ENCODE measurements at regions of chr13 and their contacts with region 1.

Region 1: DNA sequence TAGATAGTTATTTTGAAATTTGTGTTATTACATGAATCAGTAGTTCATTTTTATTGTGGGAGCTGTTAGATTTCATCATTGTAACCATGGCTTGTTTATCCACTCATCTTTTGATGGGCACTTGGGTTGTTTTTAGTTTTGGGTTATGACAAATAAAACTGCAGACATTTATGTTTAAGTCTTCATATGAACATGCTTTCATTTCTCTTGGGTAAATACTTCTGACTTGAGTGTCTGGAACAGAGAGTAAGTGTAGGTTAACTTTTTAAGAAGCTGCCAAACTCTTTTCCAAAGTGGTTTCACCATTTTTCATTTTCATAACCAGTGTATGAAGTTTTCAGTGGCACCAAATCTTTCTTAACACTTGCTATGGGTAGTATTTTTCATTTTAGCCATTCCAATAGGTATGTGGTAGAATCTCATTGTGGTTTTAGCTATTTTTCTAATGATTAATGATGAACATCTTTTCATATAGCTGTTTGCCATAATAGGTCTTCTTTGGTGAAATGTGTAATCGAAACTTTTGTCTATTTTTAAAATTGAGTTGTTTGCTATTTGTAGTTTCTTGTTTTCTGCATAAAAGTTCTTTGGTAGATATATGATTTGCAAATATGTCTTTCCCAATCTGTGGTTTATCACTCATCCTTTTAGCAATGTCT is 17.9 kb downstream of the SLAIN1 start:
- DNase-seq: no peak
- H3K4me3 Mint-ChIP-seq: no peak overlapping the region
- H3K27ac Mint-ChIP-seq: peak overlapping the region; percentile 47
- H3K4me1 Mint-ChIP-seq: peaks cover 31% of the 10 kb centered on the region
- H3K27me3 Mint-ChIP-seq: no peaks in the 10 kb centered on the region

Region 2: DNA sequence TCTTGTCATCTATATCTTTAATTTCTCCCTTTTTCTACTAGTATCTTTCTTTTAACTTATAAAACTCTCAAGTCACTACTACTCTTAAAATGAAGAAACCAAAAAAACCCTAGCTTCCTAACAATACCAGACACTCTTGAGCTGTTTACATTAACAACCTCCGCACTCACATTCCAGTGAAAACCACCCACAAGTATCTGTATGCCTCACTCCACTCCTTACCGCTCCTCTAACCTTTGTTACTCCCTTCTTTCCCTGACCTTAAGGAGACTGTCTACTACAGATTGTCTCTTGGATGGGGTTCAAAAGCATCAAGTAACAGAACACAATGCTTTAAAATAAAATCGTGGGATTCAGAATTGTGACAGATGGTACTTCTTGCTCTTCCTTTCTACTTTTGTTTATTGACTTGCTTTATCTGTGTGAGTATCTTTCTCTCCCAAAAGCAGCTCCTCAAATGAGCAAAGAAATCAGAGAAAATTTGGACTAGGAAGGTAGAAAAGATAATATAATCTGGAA is 578.4 kb before region 1 on chr13:
- intact Hi-C with region 1: no loop called
- DNase-seq: no peak
- H3K4me3 Mint-ChIP-seq: no peak overlapping the region
- H3K27ac Mint-ChIP-seq: no peak overlapping the region
- H3K4me1 Mint-ChIP-seq: no peaks in the 10 kb centered on the region
- H3K27me3 Mint-ChIP-seq: no peaks in the 10 kb centered on the region

Region 3: GRCh38 chr13:77729502-77730221 is 14.3 kb after region 1 on chr13:
- intact Hi-C with region 1: loop called (anchors 1 kb)
- DNase-seq: peak; percentile 54
- H3K4me3 Mint-ChIP-seq: peak overlapping the region; percentile 59
- H3K27ac Mint-ChIP-seq: peak overlapping the region; percentile 78
- H3K4me1 Mint-ChIP-seq: peaks cover 50% of the 10 kb centered on the region
- H3K27me3 Mint-ChIP-seq: no peaks in the 10 kb centered on the region